CD4-positive, alpha-beta memory T cell (primary cell): ENCODE measurements at regions of chr10 and their contacts with region 1.

Region 1: GRCh38 chr10:80382989-80383388 is 25.4 kb upstream of the PRXL2A start:
- DNase-seq: peak in 4 of 5 donors; percentile 50 to 69 (median 62)
- H3K4me3 ChIP-seq: no peak overlapping the region
- H3K4me3 Mint-ChIP-seq: no peak overlapping the region
- H3K27ac ChIP-seq: no peak overlapping the region
- H3K27ac Mint-ChIP-seq: peak overlapping the region in 3 of 7 donors; percentile 2 to 83 (median 2)
- H3K4me1 ChIP-seq: peaks cover 11% of the 10 kb centered on the region
- H3K4me1 Mint-ChIP-seq: peaks cover 7 to 15% (median 12%) of the 10 kb centered on the region in 4 donors
- H3K27me3 ChIP-seq: no peaks in the 10 kb centered on the region
- H3K27me3 Mint-ChIP-seq: peaks cover 0 to 6% of the 10 kb centered on the region in 2 donors

Region 2: GRCh38 chr10:80372675-80373074 is 10.3 kb before region 1 on chr10:
- CTCF ChIA-PET with region 1: interaction called, 12 read pairs
- POLR2A ChIA-PET with region 1: no interaction called
- intact Hi-C with region 1: no loop called
- DNase-seq: no peak
- H3K4me3 ChIP-seq: no peak overlapping the region
- H3K4me3 Mint-ChIP-seq: no peak overlapping the region
- H3K27ac ChIP-seq: no peak overlapping the region
- H3K27ac Mint-ChIP-seq: no peak overlapping the region
- H3K4me1 ChIP-seq: no peaks in the 10 kb centered on the region
- H3K4me1 Mint-ChIP-seq: peaks cover 0 to 2% (median under 1%) of the 10 kb centered on the region in 4 donors
- H3K27me3 ChIP-seq: no peaks in the 10 kb centered on the region
- H3K27me3 Mint-ChIP-seq: peaks cover 5 to 8% of the 10 kb centered on the region in 2 donors

Region 3: DNA sequence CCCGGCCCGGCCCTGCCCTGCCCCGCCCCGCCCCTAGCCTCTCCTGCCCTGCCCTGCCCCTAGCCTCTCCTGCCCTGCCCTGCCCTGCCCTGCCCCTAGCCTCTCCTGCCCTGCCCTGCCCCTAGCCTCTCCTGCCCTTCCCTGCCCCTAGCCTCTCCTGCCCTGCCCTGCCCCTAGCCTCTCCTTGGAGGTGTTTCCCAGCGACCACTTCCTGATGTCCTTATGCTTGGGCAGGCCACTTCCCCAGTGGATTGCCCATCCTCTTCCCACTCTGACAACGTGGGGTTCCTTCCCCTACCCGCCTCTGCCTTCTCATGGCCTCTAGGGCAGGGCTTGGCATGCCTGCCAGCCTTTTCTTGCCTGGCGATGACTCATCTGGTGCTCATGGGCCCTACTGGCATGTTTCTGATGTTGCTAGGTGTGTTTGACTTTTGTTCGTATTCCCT is 46.6 kb after region 1 on chr10:
- CTCF ChIA-PET with region 1: no interaction called
- POLR2A ChIA-PET with region 1: no interaction called
- intact Hi-C with region 1: no loop called
- DNase-seq: no peak
- H3K4me3 ChIP-seq: no peak overlapping the region
- H3K4me3 Mint-ChIP-seq: no peak overlapping the region
- H3K27ac ChIP-seq: no peak overlapping the region
- H3K27ac Mint-ChIP-seq: no peak overlapping the region
- H3K4me1 ChIP-seq: no peaks in the 10 kb centered on the region
- H3K4me1 Mint-ChIP-seq: no peaks in the 10 kb centered on the region
- H3K27me3 ChIP-seq: no peaks in the 10 kb centered on the region
- H3K27me3 Mint-ChIP-seq: no peaks in the 10 kb centered on the region

Region 4: GRCh38 chr10:80477813-80478212 is 94.8 kb after region 1 on chr10:
- CTCF ChIA-PET with region 1: no interaction called
- POLR2A ChIA-PET with region 1: no interaction called
- intact Hi-C with region 1: no loop called
- DNase-seq: peak in 1 of 5 donors; percentile 47
- H3K4me3 ChIP-seq: no peak overlapping the region
- H3K4me3 Mint-ChIP-seq: peak overlapping the region in 4 of 8 donors; percentile 7 to 68 (median 54)
- H3K27ac ChIP-seq: no peak overlapping the region
- H3K27ac Mint-ChIP-seq: peak overlapping the region; percentile 61 to 91 (median 76)
- H3K4me1 ChIP-seq: peaks cover 79% of the 10 kb centered on the region
- H3K4me1 Mint-ChIP-seq: peaks cover 51 to 82% (median 69%) of the 10 kb centered on the region in 4 donors
- H3K27me3 ChIP-seq: no peaks in the 10 kb centered on the region
- H3K27me3 Mint-ChIP-seq: no peaks in the 10 kb centered on the region

Region 5: GRCh38 chr10:80498833-80499741 is 116.1 kb after region 1 on chr10:
- CTCF ChIA-PET with region 1: interaction called, 118 read pairs
- POLR2A ChIA-PET with region 1: no interaction called
- intact Hi-C with region 1: no loop called
- DNase-seq: peak in 1 of 5 donors; percentile 74
- H3K4me3 ChIP-seq: peak overlapping the region; percentile 1 to 22
- H3K4me3 Mint-ChIP-seq: peak overlapping the region; percentile 48 to 92 (median 81)
- H3K27ac ChIP-seq: peak overlapping the region; percentile 62
- H3K27ac Mint-ChIP-seq: peak overlapping the region; percentile 83 to 97 (median 95)
- H3K4me1 ChIP-seq: peaks cover 100% of the 10 kb centered on the region
- H3K4me1 Mint-ChIP-seq: peaks cover 90 to 100% (median 95%) of the 10 kb centered on the region in 4 donors
- H3K27me3 ChIP-seq: no peaks in the 10 kb centered on the region
- H3K27me3 Mint-ChIP-seq: no peaks in the 10 kb centered on the region

Region 6: DNA sequence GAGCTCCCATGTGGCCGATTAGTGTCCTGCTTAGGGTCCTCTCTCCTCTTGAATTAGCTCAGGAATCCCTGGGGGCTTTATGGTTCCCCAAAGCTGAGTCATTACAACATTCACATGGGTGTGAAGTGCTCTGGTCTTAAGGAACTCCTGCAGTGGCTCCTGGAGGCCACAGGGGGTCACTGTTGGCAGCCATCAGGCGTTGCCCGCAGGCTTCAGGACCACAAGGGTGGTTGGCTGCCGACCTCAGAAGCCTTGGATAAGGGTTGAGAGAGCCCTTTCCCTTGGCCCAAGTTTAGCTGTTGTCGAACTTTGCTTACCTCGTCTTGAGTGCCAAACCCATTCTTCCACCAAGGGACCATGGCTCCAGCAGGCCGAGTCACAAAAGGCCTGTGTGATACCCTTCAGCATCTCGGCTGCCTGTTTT is 216.4 kb after region 1 on chr10:
- CTCF ChIA-PET with region 1: interaction called, 11 read pairs
- POLR2A ChIA-PET with region 1: no interaction called
- intact Hi-C with region 1: loop called (anchors 10 kb)
- DNase-seq: peak in 2 of 5 donors; percentile 2 to 13
- H3K4me3 ChIP-seq: no peak overlapping the region
- H3K4me3 Mint-ChIP-seq: no peak overlapping the region
- H3K27ac ChIP-seq: no peak overlapping the region
- H3K27ac Mint-ChIP-seq: no peak overlapping the region
- H3K4me1 ChIP-seq: no peaks in the 10 kb centered on the region
- H3K4me1 Mint-ChIP-seq: no peaks in the 10 kb centered on the region
- H3K27me3 ChIP-seq: no peaks in the 10 kb centered on the region
- H3K27me3 Mint-ChIP-seq: no peaks in the 10 kb centered on the region

Region 7: GRCh38 chr10:80699602-80700039 is 316.6 kb after region 1 on chr10:
- CTCF ChIA-PET with region 1: interaction called, 5 read pairs
- POLR2A ChIA-PET with region 1: no interaction called
- intact Hi-C with region 1: loop called (anchors 1 kb)
- DNase-seq: peak; percentile 38 to 54 (median 41)
- H3K4me3 ChIP-seq: no peak overlapping the region
- H3K4me3 Mint-ChIP-seq: no peak overlapping the region
- H3K27ac ChIP-seq: no peak overlapping the region
- H3K27ac Mint-ChIP-seq: no peak overlapping the region
- H3K4me1 ChIP-seq: no peaks in the 10 kb centered on the region
- H3K4me1 Mint-ChIP-seq: peaks cover 0 to 5% (median 0%) of the 10 kb centered on the region in 4 donors
- H3K27me3 ChIP-seq: no peaks in the 10 kb centered on the region
- H3K27me3 Mint-ChIP-seq: peaks cover 2 to 3% of the 10 kb centered on the region in 2 donors

Region 8: DNA sequence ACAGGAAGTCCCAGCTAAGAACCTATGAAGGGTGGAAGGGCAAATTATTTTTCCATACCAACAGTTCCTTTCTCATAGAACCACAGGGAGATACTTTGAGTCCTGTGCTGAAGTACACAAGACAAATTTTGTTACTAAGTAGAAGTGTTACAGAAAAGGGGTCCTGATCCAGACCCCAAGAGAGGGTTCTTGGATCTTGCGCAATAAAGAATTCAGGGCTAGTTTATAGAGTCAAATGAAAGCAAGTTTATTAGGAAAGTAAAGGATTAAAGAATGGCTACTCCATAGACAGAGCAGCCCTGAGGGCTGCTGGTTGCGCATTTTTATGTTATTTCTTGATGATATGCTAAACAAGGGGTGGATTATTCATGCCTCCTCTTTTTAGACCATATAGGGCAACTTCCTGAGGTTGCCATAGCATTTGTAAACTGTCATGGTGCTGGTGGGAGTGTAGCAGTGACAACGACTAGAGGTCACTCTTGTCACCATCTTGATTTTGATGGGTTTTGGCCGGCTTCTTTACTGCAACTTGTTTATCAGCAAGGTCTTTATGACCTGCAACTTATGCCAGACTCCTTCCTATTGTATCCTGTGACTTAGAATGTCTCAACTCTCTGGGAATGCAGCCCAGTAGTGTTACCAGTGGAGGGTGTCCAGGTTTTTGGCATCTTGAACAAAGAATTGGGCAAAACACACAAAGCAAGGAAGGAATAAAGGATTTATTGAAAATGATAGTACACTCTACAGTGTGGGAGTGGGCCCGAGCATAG is 564.2 kb after region 1 on chr10:
- CTCF ChIA-PET with region 1: no interaction called
- POLR2A ChIA-PET with region 1: no interaction called
- intact Hi-C with region 1: no loop called
- DNase-seq: no peak
- H3K4me3 ChIP-seq: no peak overlapping the region
- H3K4me3 Mint-ChIP-seq: no peak overlapping the region
- H3K27ac ChIP-seq: no peak overlapping the region
- H3K27ac Mint-ChIP-seq: no peak overlapping the region
- H3K4me1 ChIP-seq: no peaks in the 10 kb centered on the region
- H3K4me1 Mint-ChIP-seq: no peaks in the 10 kb centered on the region
- H3K27me3 ChIP-seq: no peaks in the 10 kb centered on the region
- H3K27me3 Mint-ChIP-seq: peaks cover 0 to 1% of the 10 kb centered on the region in 2 donors

Region 9: DNA sequence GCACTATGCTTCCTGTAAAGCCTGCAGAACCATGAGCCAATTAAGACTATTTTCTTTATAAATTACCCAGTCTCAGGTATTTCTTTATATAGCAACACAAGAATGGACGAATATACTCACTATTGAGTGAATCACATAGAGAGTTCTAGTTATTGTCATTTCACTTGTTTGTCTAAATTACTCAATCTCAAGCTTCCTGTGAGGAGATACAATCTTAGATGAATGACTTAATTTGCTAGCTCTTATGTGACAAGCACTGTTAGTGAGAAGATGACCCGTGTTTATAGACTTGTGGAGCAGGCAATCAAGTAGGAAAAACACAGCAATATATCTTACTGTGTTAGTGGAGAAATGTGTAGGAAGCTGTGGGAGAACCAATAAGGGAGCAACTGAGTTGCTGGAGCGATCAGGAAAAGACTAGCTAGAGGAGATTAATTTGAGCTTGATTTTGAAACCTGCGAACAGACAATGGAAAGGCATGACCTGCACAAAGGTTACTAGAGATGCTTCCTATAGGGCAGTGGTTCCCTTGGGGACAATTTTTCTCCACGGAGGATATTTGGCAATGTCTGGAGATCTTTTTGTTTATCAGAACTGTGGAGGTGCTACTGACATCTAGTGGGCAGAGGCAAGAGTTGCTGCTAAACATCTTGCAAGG is 635.8 kb after region 1 on chr10:
- CTCF ChIA-PET with region 1: no interaction called
- POLR2A ChIA-PET with region 1: no interaction called
- intact Hi-C with region 1: loop called (anchors 2 kb)
- DNase-seq: peak in 2 of 5 donors; percentile 1 to 6
- H3K4me3 ChIP-seq: no peak overlapping the region
- H3K4me3 Mint-ChIP-seq: no peak overlapping the region
- H3K27ac ChIP-seq: no peak overlapping the region
- H3K27ac Mint-ChIP-seq: no peak overlapping the region
- H3K4me1 ChIP-seq: no peaks in the 10 kb centered on the region
- H3K4me1 Mint-ChIP-seq: peaks cover 0 to 1% (median 0%) of the 10 kb centered on the region in 4 donors
- H3K27me3 ChIP-seq: no peaks in the 10 kb centered on the region
- H3K27me3 Mint-ChIP-seq: peaks cover 2 to 3% of the 10 kb centered on the region in 2 donors